K562 (cell line): ENCODE measurements at regions of chr6 and their contacts with region 1.

Region 1: DNA sequence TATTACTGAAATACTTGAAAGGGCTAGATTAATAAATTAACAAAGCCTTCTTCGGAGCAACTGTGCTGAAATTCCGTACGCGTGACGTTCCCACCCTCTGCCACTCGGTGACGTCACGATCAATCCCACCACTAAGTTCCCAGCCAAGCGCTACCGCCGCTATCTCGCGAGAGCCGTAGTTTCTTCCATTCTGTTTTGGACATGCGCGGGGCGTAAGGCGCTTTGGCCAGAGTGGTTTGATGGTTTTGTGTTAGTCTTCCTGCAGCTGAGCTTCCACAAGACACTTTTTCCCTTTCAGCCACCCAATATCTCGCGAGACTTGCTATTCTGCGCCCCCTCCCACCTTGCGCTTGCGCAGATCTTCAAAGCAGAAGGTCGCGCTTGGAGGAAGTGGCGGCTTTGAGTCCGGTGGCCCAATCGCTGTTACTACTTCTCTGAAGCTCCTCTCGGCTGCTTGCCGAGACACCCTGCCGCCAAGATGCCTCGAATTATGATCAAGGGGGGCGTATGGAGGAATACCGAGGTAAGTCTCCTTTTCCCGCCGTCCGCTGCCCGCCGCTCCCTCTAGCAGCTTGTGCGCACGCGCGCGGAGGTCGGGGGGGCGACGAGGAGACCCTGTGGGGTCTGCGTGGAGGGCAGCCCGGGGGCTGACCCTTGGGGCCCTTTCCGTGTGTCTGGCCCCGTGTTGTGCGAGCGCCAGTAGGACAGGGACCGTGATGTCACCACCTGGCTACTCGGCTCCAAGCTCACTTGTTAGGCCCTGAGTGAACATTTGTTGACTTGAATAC is at the start of gene CDC5L:
- DNase-seq: peak; percentile 98 to 99 (median 98)
- ATAC-seq: peak; percentile 93
- H3K4me3 ChIP-seq: peak within 1 kb of the TSS; percentile 81
- H3K27ac ChIP-seq: peak within 1 kb of the TSS; percentile 97
- H3K4me1 ChIP-seq: peaks cover 3 to 26% of the 10 kb centered on the region in 2 experiments; a peak in 4 of 5 replicates
- H3K27me3 ChIP-seq: no peaks in the 10 kb centered on the region
- CTCF ChIP-seq: peak in 1 of 3 experiments; percentile 47; a peak in 2 of 6 replicates
- EP300 ChIP-seq: 0 out of 2 replicates have a peak, but pooled peaks have one; percentile 11
- POLR2A ChIP-seq: peak; percentile 98
- RAD21 ChIP-seq: no peak
- polyA plus RNA-seq, gene CDC5L: 23.5 to 30.8 TPM

Region 2: DNA sequence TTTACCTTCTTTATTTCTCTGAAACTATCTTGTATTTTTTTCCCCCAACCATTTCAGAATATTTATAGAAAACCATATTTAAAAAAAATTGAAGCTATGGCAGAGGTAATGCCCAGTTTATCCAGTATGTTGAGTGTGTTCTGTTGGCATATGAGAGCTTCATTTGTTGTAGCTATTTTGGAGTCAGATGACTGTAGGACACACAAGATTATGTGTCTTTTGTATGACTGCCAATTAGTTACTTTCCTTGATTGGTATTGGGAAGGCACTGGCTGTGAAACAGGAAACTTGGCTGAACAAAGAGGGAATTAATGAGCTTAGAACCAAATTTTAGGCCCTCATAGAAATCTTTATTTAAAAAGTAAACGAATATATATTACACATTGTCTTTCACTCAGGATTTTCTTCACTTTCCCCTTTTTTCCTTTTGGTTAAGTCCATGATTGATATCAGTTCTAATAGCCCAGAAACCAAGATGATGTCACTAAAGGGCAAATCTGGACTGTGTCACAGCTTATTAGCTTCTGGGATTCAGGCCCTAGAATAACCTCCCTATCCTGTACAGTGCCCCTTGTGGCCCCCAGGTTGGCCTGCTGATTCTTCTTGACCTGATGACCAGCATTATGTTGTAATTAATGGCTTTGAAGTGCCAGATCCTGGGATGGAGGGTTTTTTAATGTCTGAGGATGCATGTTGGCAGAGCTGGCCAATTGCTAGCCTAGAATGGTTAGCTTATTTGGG is 10.1 kb after region 1 on chr6:
- CTCF ChIA-PET with region 1: interaction called, 4 read pairs
- POLR2A ChIA-PET with region 1: interaction called, 23 read pairs
- in situ Hi-C with region 1: no loop called
- intact Hi-C with region 1: no loop called
- DNase-seq: peak in 2 of 4 experiments; percentile 39 to 46
- ATAC-seq: peak; percentile 78
- H3K4me3 ChIP-seq: no peak overlapping the region
- H3K27ac ChIP-seq: no peak overlapping the region
- H3K4me1 ChIP-seq: no peaks in the 10 kb centered on the region
- H3K27me3 ChIP-seq: no peaks in the 10 kb centered on the region
- CTCF ChIP-seq: peak in 2 of 3 experiments; percentile 21 to 35; a peak in 3 of 6 replicates
- EP300 ChIP-seq: no peak
- POLR2A ChIP-seq: no peak
- RAD21 ChIP-seq: no peak